Naive thymus-derived CD4-positive, alpha-beta T cell (primary cell): ENCODE measurements at regions of chr5 and their contacts with region 1.

Region 1: GRCh38 chr5:139787568-139788293 is 7.9 kb upstream of the PSD2 start:
- DNase-seq: peak; percentile 48 to 91 (median 82)
- ATAC-seq: peak; percentile 92
- H3K4me3 ChIP-seq: peak overlapping the region; percentile 84
- H3K4me3 Mint-ChIP-seq: peak overlapping the region; percentile 79 to 88 (median 84)
- H3K27ac ChIP-seq: no peak overlapping the region
- H3K27ac Mint-ChIP-seq: peak overlapping the region in 1 of 9 donors; percentile 41
- H3K4me1 ChIP-seq: peaks cover 4% of the 10 kb centered on the region in 2 donors
- H3K4me1 Mint-ChIP-seq: peaks cover 0 to 7% (median 0%) of the 10 kb centered on the region in 7 donors
- H3K27me3 ChIP-seq: peaks cover 0 to 6% of the 10 kb centered on the region in 2 donors
- H3K27me3 Mint-ChIP-seq: peaks cover 17 to 48% (median 27%) of the 10 kb centered on the region in 5 donors

Region 2: GRCh38 chr5:139844472-139845145 is 56.9 kb after region 1 on chr5:
- CTCF ChIA-PET with region 1: interaction called, 8 read pairs
- POLR2A ChIA-PET with region 1: no interaction called
- intact Hi-C with region 1: loop called (anchors 1 kb)
- DNase-seq: peak; percentile 26 to 62 (median 57)
- ATAC-seq: peak; percentile 28
- H3K4me3 ChIP-seq: no peak overlapping the region
- H3K4me3 Mint-ChIP-seq: peak overlapping the region in 2 of 10 donors; percentile 21 to 49
- H3K27ac ChIP-seq: no peak overlapping the region
- H3K27ac Mint-ChIP-seq: no peak overlapping the region
- H3K4me1 ChIP-seq: peaks cover 0 to 5% of the 10 kb centered on the region in 2 donors
- H3K4me1 Mint-ChIP-seq: peaks cover 7 to 17% (median 12%) of the 10 kb centered on the region in 7 donors
- H3K27me3 ChIP-seq: no peaks in the 10 kb centered on the region
- H3K27me3 Mint-ChIP-seq: peaks cover 13 to 59% (median 16%) of the 10 kb centered on the region in 5 donors

Region 3: GRCh38 chr5:140632150-140633020 is 844.7 kb after region 1 on chr5:
- CTCF ChIA-PET with region 1: no interaction called
- POLR2A ChIA-PET with region 1: no interaction called
- intact Hi-C with region 1: no loop called
- DNase-seq: peak; percentile 29 to 64 (median 51)
- ATAC-seq: peak; percentile 81
- H3K4me3 ChIP-seq: peak overlapping the region; percentile 87
- H3K4me3 Mint-ChIP-seq: peak overlapping the region; percentile 89 to 99 (median 92)
- H3K27ac ChIP-seq: peak overlapping the region; percentile 41
- H3K27ac Mint-ChIP-seq: peak overlapping the region; percentile 29 to 88 (median 79)
- H3K4me1 ChIP-seq: peaks cover 0 to 9% of the 10 kb centered on the region in 2 donors
- H3K4me1 Mint-ChIP-seq: peaks cover 16 to 36% (median 17%) of the 10 kb centered on the region in 7 donors
- H3K27me3 ChIP-seq: no peaks in the 10 kb centered on the region
- H3K27me3 Mint-ChIP-seq: peaks cover 0 to 26% (median 0%) of the 10 kb centered on the region in 5 donors